ENCODE measurements at regions of chr9 and their contacts with region 1.

Region 1: GRCh38 chr9:91458899-91459298 is 35.3 kb upstream of the NFIL3 start:
- DNase-seq: no peak
- ATAC-seq: no peak
- H3K4me3 ChIP-seq: no peak overlapping the region
- H3K4me3 Mint-ChIP-seq: no peak overlapping the region
- H3K27ac ChIP-seq: no peak overlapping the region
- H3K27ac Mint-ChIP-seq: no peak overlapping the region
- H3K4me1 ChIP-seq: no peaks in the 10 kb centered on the region
- H3K4me1 Mint-ChIP-seq: no peaks in the 10 kb centered on the region
- H3K27me3 ChIP-seq: no peaks in the 10 kb centered on the region
- H3K27me3 Mint-ChIP-seq: peaks cover 16 to 25% of the 10 kb centered on the region in 2 donors

Region 2: DNA sequence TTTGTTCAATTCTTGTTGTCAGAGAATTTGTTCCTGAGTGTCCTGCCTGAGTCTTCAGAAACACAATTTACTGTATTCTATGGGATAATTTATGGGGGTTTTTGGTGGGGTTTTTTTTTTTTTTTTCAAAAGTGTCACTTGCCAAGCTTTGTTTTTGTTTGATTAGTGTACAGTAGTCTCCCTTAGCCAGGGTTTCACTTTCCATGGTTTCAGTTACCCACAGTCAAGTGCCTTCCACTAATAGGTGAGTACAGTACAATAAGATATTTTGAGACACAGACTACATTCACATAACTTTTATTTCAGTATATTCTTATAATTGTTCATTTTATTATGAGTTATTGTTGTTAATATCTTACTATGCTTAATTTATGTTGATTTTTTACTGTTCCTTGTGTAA is 72.1 kb before region 1 on chr9:
- CTCF ChIA-PET with region 1: no interaction called
- POLR2A ChIA-PET with region 1: interaction called in 1 of 2 experiments, 12 read pairs
- DNase-seq: no peak
- ATAC-seq: no peak
- H3K4me3 ChIP-seq: no peak overlapping the region
- H3K4me3 Mint-ChIP-seq: no peak overlapping the region
- H3K27ac ChIP-seq: no peak overlapping the region
- H3K27ac Mint-ChIP-seq: no peak overlapping the region
- H3K4me1 ChIP-seq: no peaks in the 10 kb centered on the region
- H3K4me1 Mint-ChIP-seq: no peaks in the 10 kb centered on the region
- H3K27me3 ChIP-seq: no peaks in the 10 kb centered on the region
- H3K27me3 Mint-ChIP-seq: peaks cover 0 to 2% of the 10 kb centered on the region in 2 donors

Region 3: DNA sequence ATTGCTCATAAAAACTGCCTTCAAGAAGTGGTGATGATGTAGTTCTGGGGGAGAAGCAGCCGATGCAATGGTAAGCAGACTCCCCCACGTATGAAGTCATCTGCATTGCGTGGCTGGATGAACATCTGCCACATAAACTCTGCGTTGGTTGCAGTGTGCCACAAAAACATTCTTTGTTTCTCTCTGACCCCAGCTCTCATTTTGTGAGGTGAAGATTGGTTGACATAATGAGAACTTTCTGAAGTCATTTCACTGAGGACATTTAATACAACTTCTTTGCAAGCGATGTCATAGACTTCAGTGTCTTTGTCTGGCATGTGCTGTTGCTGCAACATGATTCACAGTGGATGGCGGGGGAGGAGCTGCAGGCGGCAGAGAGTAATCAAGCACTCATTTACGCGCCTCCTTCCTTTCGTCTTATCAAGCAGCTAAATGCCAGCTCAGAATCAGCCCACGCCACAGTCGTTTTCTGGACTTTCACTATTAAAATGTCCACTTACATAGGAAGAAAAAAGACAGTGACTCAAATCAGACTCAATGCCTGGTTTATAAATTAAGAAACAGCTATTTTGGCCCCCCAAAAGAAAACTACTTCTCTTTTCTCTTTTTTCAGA is 56.3 kb after region 1 on chr9:
- CTCF ChIA-PET with region 1: no interaction called
- POLR2A ChIA-PET with region 1: no interaction called
- DNase-seq: no peak
- ATAC-seq: no peak
- H3K4me3 ChIP-seq: no peak overlapping the region
- H3K4me3 Mint-ChIP-seq: no peak overlapping the region
- H3K27ac ChIP-seq: no peak overlapping the region
- H3K27ac Mint-ChIP-seq: no peak overlapping the region
- H3K4me1 ChIP-seq: no peaks in the 10 kb centered on the region
- H3K4me1 Mint-ChIP-seq: no peaks in the 10 kb centered on the region
- H3K27me3 ChIP-seq: peaks cover 0 to 11% of the 10 kb centered on the region in 2 experiments
- H3K27me3 Mint-ChIP-seq: peaks cover 23 to 42% of the 10 kb centered on the region in 2 donors

Measured in T-cell (primary cell).